ENCODE measurements at regions of chr14 and their contacts with region 1.

Region 1: GRCh38 chr14:105617201-105617777 is 90.9 kb downstream of the TMEM121 start:
- DNase-seq: peak in 1 of 5 donors; percentile 54
- ATAC-seq: peak in 2 of 4 donors; percentile 28 to 54
- H3K4me3 ChIP-seq: no peak overlapping the region
- H3K27ac ChIP-seq: no peak overlapping the region
- H3K4me1 ChIP-seq: no peaks in the 10 kb centered on the region
- H3K27me3 ChIP-seq: peaks cover 0 to 8% (median 0%) of the 10 kb centered on the region in 9 donors
- CTCF ChIP-seq: peak in 2 of 12 donors; percentile 8 to 30
- POLR2A ChIP-seq: no peak

Region 2: DNA sequence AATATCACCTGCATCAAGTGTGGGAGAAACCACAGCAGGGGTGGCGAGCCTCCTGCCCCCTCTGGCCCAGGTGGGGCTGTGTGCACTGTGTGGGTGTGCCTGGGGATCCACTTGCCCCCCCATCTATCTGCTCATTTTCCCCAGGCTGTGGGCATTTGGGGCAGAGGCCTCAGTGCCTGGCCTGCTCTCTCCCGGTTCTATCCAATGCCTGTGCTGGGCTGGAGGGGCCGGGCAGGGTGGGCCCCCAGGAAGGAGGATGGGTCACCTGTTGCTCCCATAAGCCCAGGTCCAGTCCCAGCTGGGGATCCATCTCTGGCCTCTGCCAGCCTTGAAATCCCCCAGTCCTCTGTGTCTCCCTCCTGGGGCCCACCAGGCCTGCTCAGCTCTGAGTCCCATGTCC is 14.7 kb after region 1 on chr14:
- intact Hi-C with region 1: loop called in 1 of 10 experiments (anchors 2 kb)
- DNase-seq: no peak
- ATAC-seq: no peak
- H3K4me3 ChIP-seq: no peak overlapping the region
- H3K27ac ChIP-seq: no peak overlapping the region
- H3K4me1 ChIP-seq: no peaks in the 10 kb centered on the region
- H3K27me3 ChIP-seq: no peaks in the 10 kb centered on the region
- CTCF ChIP-seq: no peak
- POLR2A ChIP-seq: no peak

Region 3: GRCh38 chr14:105738261-105739037 is 121.2 kb after region 1 on chr14:
- intact Hi-C with region 1: loop called in 1 of 10 experiments (anchors 10 kb)
- DNase-seq: no peak
- ATAC-seq: peak in 2 of 4 donors; percentile 16 to 18
- H3K4me3 ChIP-seq: no peak overlapping the region
- H3K27ac ChIP-seq: no peak overlapping the region
- H3K4me1 ChIP-seq: no peaks in the 10 kb centered on the region
- H3K27me3 ChIP-seq: no peaks in the 10 kb centered on the region
- CTCF ChIP-seq: no peak
- POLR2A ChIP-seq: no peak

Region 4: GRCh38 chr14:105760691-105761346 is 143.5 kb after region 1 on chr14:
- intact Hi-C with region 1: loop called in 6 of 10 experiments (anchors 2 to 5 kb)
- DNase-seq: peak in 2 of 5 donors; percentile 5 to 47
- ATAC-seq: peak in 1 of 4 donors; percentile 50
- H3K4me3 ChIP-seq: no peak overlapping the region
- H3K27ac ChIP-seq: no peak overlapping the region
- H3K4me1 ChIP-seq: peaks cover 0 to 5% (median 0%) of the 10 kb centered on the region in 12 donors
- H3K27me3 ChIP-seq: no peaks in the 10 kb centered on the region
- CTCF ChIP-seq: no peak
- POLR2A ChIP-seq: no peak

Region 5: GRCh38 chr14:105974902-105975301 is 357.6 kb after region 1 on chr14:
- intact Hi-C with region 1: no loop called
- DNase-seq: no peak
- ATAC-seq: no peak
- H3K4me3 ChIP-seq: no peak overlapping the region
- H3K27ac ChIP-seq: no peak overlapping the region
- H3K4me1 ChIP-seq: no peaks in the 10 kb centered on the region
- H3K27me3 ChIP-seq: peaks cover 0 to 21% (median 0%) of the 10 kb centered on the region in 9 donors
- CTCF ChIP-seq: peak in 2 of 12 donors; percentile 20 to 22
- POLR2A ChIP-seq: no peak

Measured in heart left ventricle (tissue), 16 donors.